Breast epithelium (tissue), 4 donors: ENCODE measurements at regions of chr2 and their contacts with region 1.

Region 1: GRCh38 chr2:223744573-223744972 is 92.8 kb downstream of the AP1S3 start:
- DNase-seq: no peak
- H3K4me3 ChIP-seq: no peak overlapping the region
- H3K27ac ChIP-seq: no peak overlapping the region
- H3K4me1 ChIP-seq: no peaks in the 10 kb centered on the region
- H3K27me3 ChIP-seq: no peaks in the 10 kb centered on the region
- CTCF ChIP-seq: no peak
- POLR2A ChIP-seq: no peak

Region 2: GRCh38 chr2:223488814-223489213 is 255.8 kb before region 1 on chr2:
- intact Hi-C with region 1: no loop called
- DNase-seq: no peak
- H3K4me3 ChIP-seq: no peak overlapping the region
- H3K27ac ChIP-seq: no peak overlapping the region
- H3K4me1 ChIP-seq: no peaks in the 10 kb centered on the region
- H3K27me3 ChIP-seq: no peaks in the 10 kb centered on the region
- CTCF ChIP-seq: no peak
- POLR2A ChIP-seq: no peak

Region 3: GRCh38 chr2:223786943-223787342 is 42.4 kb after region 1 on chr2:
- intact Hi-C with region 1: loop called (anchors 2 kb)
- DNase-seq: no peak
- H3K4me3 ChIP-seq: no peak overlapping the region
- H3K27ac ChIP-seq: no peak overlapping the region
- H3K4me1 ChIP-seq: no peaks in the 10 kb centered on the region
- H3K27me3 ChIP-seq: no peaks in the 10 kb centered on the region
- CTCF ChIP-seq: no peak
- POLR2A ChIP-seq: no peak

Region 4: DNA sequence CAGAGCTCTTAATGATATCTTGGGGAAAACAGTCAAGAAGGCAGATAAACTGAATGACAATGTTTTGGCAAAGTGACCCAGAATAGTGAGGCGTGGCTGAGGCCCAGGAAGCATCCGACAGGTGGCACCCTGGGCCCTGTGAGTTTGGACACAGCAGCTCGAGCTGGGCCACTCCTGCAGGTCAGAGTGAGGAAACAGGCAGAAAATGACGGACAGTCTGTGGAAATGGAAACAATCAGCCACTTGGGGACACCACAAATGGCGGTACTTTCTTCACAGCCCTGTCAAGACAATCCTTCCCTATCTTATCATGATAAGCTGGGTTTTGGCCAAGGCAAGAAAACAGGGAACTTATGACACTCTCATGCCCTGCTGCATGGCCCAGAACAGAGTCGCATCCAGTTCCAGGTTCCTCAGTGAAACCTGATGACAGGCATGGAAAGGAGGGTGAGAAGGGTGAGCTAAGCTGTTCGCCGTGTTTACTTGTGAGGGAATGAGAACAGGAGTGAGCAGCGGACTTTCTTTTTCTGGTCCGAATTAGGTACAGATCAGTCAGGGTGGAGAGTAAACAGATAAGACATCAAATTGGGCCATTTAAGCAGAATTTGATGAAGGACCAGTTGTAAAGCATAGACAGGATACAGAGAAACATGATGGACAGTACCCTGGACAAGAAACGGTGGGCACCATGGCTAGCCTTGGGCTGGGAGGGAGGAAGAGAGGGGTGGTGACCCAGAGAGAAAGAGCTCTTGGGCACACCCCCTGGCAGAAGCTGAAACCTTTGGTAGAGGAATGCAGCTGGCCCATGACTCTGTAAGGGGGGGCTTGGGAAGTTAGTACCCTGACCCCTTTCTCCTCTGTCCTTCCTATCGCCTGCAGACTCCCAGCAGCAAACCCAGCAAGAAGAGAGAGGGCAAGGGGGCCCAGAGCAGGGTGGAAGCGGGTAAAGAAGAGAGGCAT is 245.0 kb after region 1 on chr2:
- intact Hi-C with region 1: no loop called
- DNase-seq: no peak
- H3K4me3 ChIP-seq: no peak overlapping the region
- H3K27ac ChIP-seq: no peak overlapping the region
- H3K4me1 ChIP-seq: no peaks in the 10 kb centered on the region
- H3K27me3 ChIP-seq: no peaks in the 10 kb centered on the region
- CTCF ChIP-seq: no peak
- POLR2A ChIP-seq: no peak